BJ (cell line): ENCODE measurements at regions of chr11 and their contacts with region 1.

Region 1: DNA sequence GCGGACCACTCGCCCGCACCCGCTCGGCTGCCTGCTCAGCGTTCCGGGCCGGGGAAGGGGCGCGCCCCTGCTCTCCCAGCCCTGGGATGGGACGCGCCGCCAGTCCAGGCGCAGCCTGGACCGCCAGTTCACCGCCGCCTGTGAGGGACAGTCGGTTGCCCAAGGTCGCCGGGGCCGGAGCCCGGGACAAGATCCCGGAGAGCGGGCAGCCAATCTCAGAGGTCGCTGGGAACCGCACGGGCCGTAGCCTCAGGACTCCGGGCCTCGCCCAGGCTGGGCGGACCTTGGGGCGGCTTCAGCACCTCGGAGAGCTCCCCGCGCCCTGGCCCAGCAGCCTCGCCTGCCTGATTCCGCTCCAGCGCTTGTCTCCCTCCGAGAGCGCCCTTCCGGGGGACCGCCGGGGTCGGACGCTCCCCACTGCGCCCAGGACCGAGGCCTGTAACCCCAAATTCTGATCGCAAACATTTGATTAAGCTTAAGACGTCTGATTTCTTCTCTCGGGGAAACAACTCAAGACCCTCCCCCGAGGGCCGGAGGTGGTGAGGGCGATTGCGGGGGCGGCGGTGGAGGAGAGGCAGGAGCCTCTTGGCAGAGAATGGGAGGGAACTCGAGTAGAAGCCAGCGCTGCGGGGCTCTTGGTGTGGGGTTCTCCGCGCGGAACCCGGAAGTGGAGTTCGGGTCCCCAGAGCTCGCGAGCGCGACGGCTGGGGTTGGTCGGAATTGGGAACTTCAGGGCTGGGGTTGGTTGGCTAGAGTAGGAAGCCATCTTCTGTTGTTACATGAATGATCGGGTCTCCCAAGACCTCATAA is 1.1 kb upstream of the CHRM4 start:
- DNase-seq: no peak
- H3K4me3 ChIP-seq: peak overlapping the region; percentile 41
- H3K27me3 ChIP-seq: peaks cover 20% of the 10 kb centered on the region
- CTCF ChIP-seq: no peak

Region 2: DNA sequence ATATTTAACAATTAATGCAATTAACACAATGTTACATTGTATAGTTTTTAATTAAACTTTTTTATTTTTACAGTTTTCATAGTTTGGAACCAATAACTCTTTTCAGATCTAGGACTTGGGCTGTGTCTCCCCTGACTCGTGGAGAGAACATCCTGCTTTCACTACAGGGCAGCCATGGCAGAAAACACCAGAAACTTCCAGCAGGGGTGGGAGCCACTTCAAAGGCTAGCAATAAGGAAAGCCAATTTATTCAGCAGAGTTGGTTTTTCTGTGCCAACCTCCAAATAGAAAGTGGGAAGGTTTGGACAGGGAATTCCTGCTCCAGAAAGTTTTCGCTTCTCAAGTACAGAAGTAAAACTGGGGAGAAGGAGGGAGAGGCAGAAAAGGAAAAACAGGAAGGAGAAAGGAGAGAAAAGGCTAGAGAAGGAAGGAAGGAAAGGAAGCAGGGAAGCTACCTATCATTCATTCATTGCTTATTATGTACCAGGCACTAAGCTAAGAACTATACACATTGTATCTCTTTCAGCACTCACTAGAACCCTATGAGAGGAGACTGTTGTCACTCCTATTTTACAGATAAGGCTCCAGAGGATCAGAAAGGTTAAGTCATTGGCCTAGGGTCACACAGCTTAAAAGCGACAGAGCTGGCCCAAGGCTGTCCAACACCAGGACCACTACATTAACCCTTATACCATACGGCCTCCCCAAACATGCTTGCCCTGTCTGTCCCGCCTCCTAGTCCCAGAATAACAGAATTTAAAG is 170.0 kb before region 1 on chr11:
- CTCF ChIA-PET with region 1: no interaction called
- POLR2A ChIA-PET with region 1: no interaction called
- DNase-seq: no peak
- H3K4me3 ChIP-seq: no peak overlapping the region
- H3K27me3 ChIP-seq: peaks cover 4% of the 10 kb centered on the region; the same call in 1 of the 2 replicates
- CTCF ChIP-seq: no peak

Region 3: GRCh38 chr11:46404476-46405017 is 11.9 kb after region 1 on chr11:
- CTCF ChIA-PET with region 1: interaction called, 18 read pairs
- POLR2A ChIA-PET with region 1: no interaction called
- DNase-seq: no peak
- H3K4me3 ChIP-seq: no peak overlapping the region
- H3K27me3 ChIP-seq: no peaks in the 10 kb centered on the region
- CTCF ChIP-seq: no peak

Region 4: DNA sequence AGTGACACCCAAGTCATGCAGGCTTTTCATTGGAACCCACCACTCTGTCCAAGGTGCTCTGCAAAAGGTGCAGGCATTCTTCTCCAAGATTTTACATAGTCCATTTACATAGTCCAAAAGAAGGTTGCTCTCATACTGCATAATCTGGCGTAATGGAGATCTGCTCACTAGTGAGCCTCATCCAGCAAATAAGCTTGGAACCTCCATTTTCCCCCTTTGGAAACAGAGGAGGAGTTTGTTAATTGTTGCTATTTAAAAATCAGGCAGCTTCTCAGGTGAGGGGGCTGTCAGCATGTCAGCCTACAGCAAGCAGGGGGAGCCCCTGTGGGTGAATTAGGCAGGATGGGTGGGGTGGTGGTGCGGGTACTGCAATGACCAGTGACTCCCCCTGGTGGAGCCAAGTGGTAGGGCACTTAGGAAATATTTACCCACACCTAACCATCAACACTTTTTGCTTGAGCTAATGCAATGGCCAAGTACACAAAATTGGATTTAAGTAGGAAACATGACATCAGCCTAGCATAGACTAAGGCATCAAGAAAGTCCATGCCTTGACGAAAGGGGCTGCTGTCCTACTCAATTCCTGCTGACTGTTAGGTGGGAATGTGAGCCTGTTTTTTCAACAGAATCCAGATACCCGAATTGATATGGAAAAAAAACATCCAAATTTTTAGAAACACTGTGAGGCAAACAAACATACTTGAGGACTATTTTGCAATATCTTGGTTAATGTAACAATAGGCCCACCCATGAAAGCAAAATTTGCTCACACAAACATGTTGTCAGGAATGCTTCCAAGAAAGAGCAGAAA is 136.7 kb after region 1 on chr11:
- CTCF ChIA-PET with region 1: interaction called, 30 read pairs
- POLR2A ChIA-PET with region 1: no interaction called
- DNase-seq: no peak
- H3K4me3 ChIP-seq: no peak overlapping the region
- H3K27me3 ChIP-seq: no peaks in the 10 kb centered on the region
- CTCF ChIP-seq: peak; percentile 95

Region 5: GRCh38 chr11:46537537-46538295 is 145.1 kb after region 1 on chr11:
- CTCF ChIA-PET with region 1: interaction called, 81 read pairs
- POLR2A ChIA-PET with region 1: no interaction called
- DNase-seq: no peak
- H3K4me3 ChIP-seq: no peak overlapping the region
- H3K27me3 ChIP-seq: no peaks in the 10 kb centered on the region
- CTCF ChIP-seq: peak; percentile 95

Region 6: DNA sequence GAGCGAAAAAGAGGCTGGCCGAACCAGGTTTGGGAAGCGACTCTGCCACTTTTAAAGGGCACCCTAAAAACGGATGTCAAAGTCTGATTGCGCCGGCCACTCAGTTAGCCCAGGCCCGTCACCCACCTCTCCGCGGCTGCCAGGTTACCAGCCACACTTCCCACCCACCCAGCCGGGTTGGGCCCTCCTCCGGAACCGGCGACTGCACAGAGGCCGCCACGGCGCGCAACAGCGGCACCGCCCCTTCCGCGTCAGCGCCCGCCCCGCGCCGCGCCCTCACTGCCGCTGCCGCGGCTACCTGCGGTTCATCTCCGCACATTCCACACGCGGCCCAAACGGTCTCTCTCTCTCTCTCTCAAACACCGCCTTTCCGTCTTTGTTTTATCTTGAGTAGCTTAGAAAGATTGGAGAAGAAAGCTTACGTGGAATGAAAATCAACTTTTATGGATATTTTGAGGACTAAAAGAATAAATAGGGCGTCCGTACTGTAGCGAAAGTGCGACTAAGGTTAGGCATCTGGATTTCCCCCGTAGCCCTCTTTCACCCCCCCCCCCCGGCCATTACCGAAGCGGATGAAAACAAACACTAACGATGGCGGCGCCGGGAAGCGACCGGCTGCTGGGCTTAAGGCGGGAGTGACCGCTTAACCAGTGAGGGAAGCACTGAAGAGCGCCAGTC is 224.5 kb after region 1 on chr11 and contains the starts of genes ATG13 and HARBI1:
- CTCF ChIA-PET with region 1: interaction called, 15 read pairs
- POLR2A ChIA-PET with region 1: no interaction called
- DNase-seq: peak; percentile 21
- H3K4me3 ChIP-seq: peak within 1 kb of the TSS; percentile 100
- H3K27me3 ChIP-seq: no peaks in the 10 kb centered on the region
- CTCF ChIP-seq: no peak
- polyA plus RNA-seq, gene ATG13: 80.0 and 111 TPM in 2 replicates
- polyA plus RNA-seq, gene HARBI1: 3.6 and 4.5 TPM in 2 replicates